GM12878 (cell line): ENCODE measurements at regions of chr12 and their contacts with region 1.

Region 1: GRCh38 chr12:6195665-6196535 is 4.3 kb upstream of the CD9 start:
- DNase-seq: peak; percentile 16
- ATAC-seq: peak; percentile 75
- H3K4me3 ChIP-seq: no peak overlapping the region
- H3K27ac ChIP-seq: no peak overlapping the region
- H3K4me1 ChIP-seq: no peaks in the 10 kb centered on the region; the same call in 1 of the 2 replicates
- H3K27me3 ChIP-seq: peaks cover 2 to 14% of the 10 kb centered on the region in 2 experiments; a peak in 3 of 4 replicates
- CTCF ChIP-seq: peak; percentile 90 to 95 (median 94); a peak in 5 of 6 replicates
- EP300 ChIP-seq: no peak
- POLR2A ChIP-seq: no peak
- RAD21 ChIP-seq: peak; percentile 80

Region 2: DNA sequence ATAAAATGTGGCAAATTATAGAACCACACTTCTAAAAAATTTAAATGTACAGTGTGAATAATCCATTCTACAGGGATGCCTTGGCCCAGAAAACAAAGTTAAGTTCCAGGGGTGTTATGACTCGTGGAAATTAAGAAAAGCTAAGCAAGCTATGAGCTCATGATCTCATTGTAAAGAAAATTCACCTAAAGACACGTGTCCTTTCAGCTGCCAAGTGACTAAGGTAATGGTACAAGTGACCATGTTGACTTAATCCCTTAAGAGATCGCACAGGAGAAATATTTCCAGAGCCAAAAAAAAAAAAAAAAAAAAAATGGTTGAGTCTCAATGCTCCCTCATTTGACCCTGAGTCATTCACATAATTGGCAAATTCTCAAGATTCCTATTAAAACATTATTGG is 199.4 kb before region 1 on chr12:
- CTCF ChIA-PET with region 1: no interaction called
- POLR2A ChIA-PET with region 1: no interaction called
- RAD21 ChIA-PET with region 1: no interaction called
- SMC1A ChIA-PET with region 1: no interaction called
- in situ Hi-C with region 1: no loop called
- intact Hi-C with region 1: no loop called
- DNase-seq: no peak
- ATAC-seq: no peak
- H3K4me3 ChIP-seq: no peak overlapping the region
- H3K27ac ChIP-seq: no peak overlapping the region
- H3K4me1 ChIP-seq: no peaks in the 10 kb centered on the region
- H3K27me3 ChIP-seq: peaks cover 0 to 3% of the 10 kb centered on the region in 2 experiments; a peak in 3 of 4 replicates
- CTCF ChIP-seq: no peak
- EP300 ChIP-seq: no peak
- POLR2A ChIP-seq: no peak
- RAD21 ChIP-seq: no peak

Region 3: GRCh38 chr12:6062757-6063735 is 132.9 kb before region 1 on chr12:
- CTCF ChIA-PET with region 1: interaction called, 7 read pairs
- POLR2A ChIA-PET with region 1: interaction called, 3 read pairs
- RAD21 ChIA-PET with region 1: interaction called, 4 read pairs
- SMC1A ChIA-PET with region 1: no interaction called
- in situ Hi-C with region 1: no loop called
- intact Hi-C with region 1: loop called (anchors 2 kb)
- DNase-seq: no peak
- ATAC-seq: peak; percentile 96
- H3K4me3 ChIP-seq: no peak overlapping the region
- H3K27ac ChIP-seq: no peak overlapping the region
- H3K4me1 ChIP-seq: no peaks in the 10 kb centered on the region
- H3K27me3 ChIP-seq: no peaks in the 10 kb centered on the region; a peak in 1 of 4 replicates
- CTCF ChIP-seq: peak; percentile 83 to 96 (median 94)
- EP300 ChIP-seq: no peak
- POLR2A ChIP-seq: no peak
- RAD21 ChIP-seq: peak; percentile 94

Region 4: GRCh38 chr12:6215932-6216494 is 20.1 kb after region 1 on chr12:
- CTCF ChIA-PET with region 1: interaction called, 38 read pairs
- POLR2A ChIA-PET with region 1: interaction called, 9 read pairs
- RAD21 ChIA-PET with region 1: interaction called, 9 read pairs
- SMC1A ChIA-PET with region 1: interaction called, 30 read pairs
- in situ Hi-C with region 1: no loop called
- intact Hi-C with region 1: no loop called
- DNase-seq: no peak
- ATAC-seq: peak; percentile 34
- H3K4me3 ChIP-seq: no peak overlapping the region
- H3K27ac ChIP-seq: no peak overlapping the region
- H3K4me1 ChIP-seq: no peaks in the 10 kb centered on the region
- H3K27me3 ChIP-seq: no peaks in the 10 kb centered on the region; a peak in 1 of 4 replicates
- CTCF ChIP-seq: no peak
- EP300 ChIP-seq: no peak
- POLR2A ChIP-seq: no peak
- RAD21 ChIP-seq: no peak

Region 5: DNA sequence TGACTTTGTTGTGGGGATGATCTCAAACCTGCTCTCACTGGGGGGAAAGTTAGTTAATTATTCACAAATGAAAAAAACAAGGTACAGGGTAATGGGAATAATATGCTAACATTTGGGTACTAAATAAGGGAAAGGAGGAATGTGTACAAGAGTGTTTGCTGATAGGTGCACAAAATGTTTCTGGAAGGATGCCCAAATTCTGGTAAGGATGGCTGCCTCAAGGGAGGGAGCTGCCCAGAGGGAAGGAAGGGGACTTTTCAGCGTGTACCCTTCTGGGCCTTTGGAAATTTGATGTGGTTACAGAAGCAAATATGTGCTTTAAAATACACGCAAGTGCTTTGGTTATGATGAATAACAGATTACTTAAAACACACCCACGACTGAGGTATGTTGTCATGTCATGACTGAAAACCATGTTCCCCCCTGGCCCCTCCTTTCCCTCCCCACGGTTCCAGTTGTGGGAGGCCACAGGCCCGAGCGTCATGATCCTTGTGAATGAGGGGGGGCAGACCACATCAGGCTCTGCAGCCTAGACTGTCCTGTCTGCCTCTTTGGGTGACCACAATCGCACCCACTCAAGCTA is 71.3 kb after region 1 on chr12:
- CTCF ChIA-PET with region 1: interaction called, 401 read pairs
- POLR2A ChIA-PET with region 1: interaction called, 4 read pairs
- RAD21 ChIA-PET with region 1: interaction called, 304 read pairs
- SMC1A ChIA-PET with region 1: interaction called, 47 read pairs
- in situ Hi-C with region 1: no loop called
- intact Hi-C with region 1: no loop called
- DNase-seq: no peak
- ATAC-seq: peak; percentile 77
- H3K4me3 ChIP-seq: no peak overlapping the region
- H3K27ac ChIP-seq: no peak overlapping the region
- H3K4me1 ChIP-seq: peaks cover 5% of the 10 kb centered on the region
- H3K27me3 ChIP-seq: no peaks in the 10 kb centered on the region
- CTCF ChIP-seq: no peak
- EP300 ChIP-seq: peak in 1 of 2 experiments; percentile 62; a peak in 2 of 4 replicates
- POLR2A ChIP-seq: no peak
- RAD21 ChIP-seq: no peak

Region 6: DNA sequence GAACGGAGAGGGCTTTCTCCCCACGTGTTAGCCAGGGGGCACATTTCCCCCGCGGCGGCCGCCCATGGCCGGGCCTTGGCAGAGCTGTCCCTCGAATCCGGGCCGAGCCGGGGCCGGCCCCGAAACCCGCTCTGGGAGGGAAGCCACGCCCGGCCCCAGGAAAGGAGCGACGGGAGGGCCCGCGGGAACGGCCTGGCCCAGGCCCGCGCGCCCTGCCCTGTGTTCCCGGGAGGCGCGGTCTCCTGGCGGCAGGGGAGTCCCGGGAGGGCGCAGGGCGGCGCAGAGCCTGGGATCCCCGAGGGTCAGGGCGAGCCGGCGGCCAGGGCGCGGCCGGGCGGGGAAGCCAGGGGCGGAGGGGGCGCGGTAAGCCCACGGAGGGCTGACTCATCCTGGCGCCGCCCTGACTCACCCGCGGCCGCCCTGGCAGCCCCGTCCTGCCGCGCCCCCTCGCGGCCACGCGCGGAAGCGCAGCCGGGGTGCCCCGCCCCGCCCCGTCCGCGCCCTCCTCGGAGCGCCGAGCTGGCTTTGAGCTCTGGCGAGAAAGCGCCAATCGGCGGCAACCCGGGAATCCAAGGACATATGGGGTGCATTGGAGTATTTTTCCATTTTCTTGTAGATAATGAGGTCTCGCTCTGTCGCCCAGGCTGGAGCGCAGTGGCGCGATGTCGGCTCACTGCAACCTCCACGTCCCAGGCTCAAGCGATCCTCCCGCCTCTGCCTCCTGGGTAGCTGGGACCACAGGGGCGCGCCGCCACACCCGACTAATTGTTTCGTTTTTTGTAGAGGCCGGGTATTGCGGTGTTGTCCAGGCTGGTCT is 82.7 kb after region 1 on chr12:
- CTCF ChIA-PET with region 1: interaction called, 401 read pairs
- POLR2A ChIA-PET with region 1: interaction called, 43 read pairs
- RAD21 ChIA-PET with region 1: interaction called, 304 read pairs
- SMC1A ChIA-PET with region 1: interaction called, 107 read pairs
- in situ Hi-C with region 1: loop called (anchors 5 kb)
- intact Hi-C with region 1: loop called (anchors 1 kb)
- DNase-seq: no peak
- ATAC-seq: peak; percentile 95
- H3K4me3 ChIP-seq: peak overlapping the region; percentile 52; the same call in 1 of the 2 replicates
- H3K27ac ChIP-seq: peak overlapping the region; percentile 25; the same call in 1 of the 2 replicates
- H3K4me1 ChIP-seq: peaks cover 7% of the 10 kb centered on the region; the same call in 1 of the 2 replicates
- H3K27me3 ChIP-seq: no peaks in the 10 kb centered on the region
- CTCF ChIP-seq: peak; percentile 66 to 83 (median 78); a peak in 5 of 6 replicates
- EP300 ChIP-seq: no peak
- POLR2A ChIP-seq: no peak
- RAD21 ChIP-seq: peak; percentile 76

Region 7: GRCh38 chr12:6476489-6476888 is 280.6 kb after region 1 on chr12:
- CTCF ChIA-PET with region 1: no interaction called
- POLR2A ChIA-PET with region 1: no interaction called
- RAD21 ChIA-PET with region 1: no interaction called
- SMC1A ChIA-PET with region 1: no interaction called
- in situ Hi-C with region 1: no loop called
- intact Hi-C with region 1: no loop called
- DNase-seq: no peak
- ATAC-seq: no peak
- H3K4me3 ChIP-seq: no peak overlapping the region
- H3K27ac ChIP-seq: no peak overlapping the region
- H3K4me1 ChIP-seq: peaks cover 7% of the 10 kb centered on the region
- H3K27me3 ChIP-seq: no peaks in the 10 kb centered on the region
- CTCF ChIP-seq: no peak
- EP300 ChIP-seq: no peak
- POLR2A ChIP-seq: no peak
- RAD21 ChIP-seq: no peak